A549 (cell line): ENCODE measurements at regions of chr9 and their contacts with region 1.

Region 1: GRCh38 chr9:136762915-136763648 is 1.2 kb downstream of the LCN15 start:
- DNase-seq: peak; percentile 49 to 79
- ATAC-seq: peak; percentile 21 to 68; a peak in 4 of 6 replicates
- H3K4me3 ChIP-seq: no peak overlapping the region
- H3K27ac ChIP-seq: peak overlapping the region in 1 of 2 experiments; percentile 68; a peak in 3 of 6 replicates
- H3K4me1 ChIP-seq: peaks cover 16% of the 10 kb centered on the region
- CTCF ChIP-seq: no peak
- EP300 ChIP-seq: no peak
- POLR2A ChIP-seq: peak; percentile 22; the same call in 1 of the 2 replicates
- RAD21 ChIP-seq: no peak

Region 2: DNA sequence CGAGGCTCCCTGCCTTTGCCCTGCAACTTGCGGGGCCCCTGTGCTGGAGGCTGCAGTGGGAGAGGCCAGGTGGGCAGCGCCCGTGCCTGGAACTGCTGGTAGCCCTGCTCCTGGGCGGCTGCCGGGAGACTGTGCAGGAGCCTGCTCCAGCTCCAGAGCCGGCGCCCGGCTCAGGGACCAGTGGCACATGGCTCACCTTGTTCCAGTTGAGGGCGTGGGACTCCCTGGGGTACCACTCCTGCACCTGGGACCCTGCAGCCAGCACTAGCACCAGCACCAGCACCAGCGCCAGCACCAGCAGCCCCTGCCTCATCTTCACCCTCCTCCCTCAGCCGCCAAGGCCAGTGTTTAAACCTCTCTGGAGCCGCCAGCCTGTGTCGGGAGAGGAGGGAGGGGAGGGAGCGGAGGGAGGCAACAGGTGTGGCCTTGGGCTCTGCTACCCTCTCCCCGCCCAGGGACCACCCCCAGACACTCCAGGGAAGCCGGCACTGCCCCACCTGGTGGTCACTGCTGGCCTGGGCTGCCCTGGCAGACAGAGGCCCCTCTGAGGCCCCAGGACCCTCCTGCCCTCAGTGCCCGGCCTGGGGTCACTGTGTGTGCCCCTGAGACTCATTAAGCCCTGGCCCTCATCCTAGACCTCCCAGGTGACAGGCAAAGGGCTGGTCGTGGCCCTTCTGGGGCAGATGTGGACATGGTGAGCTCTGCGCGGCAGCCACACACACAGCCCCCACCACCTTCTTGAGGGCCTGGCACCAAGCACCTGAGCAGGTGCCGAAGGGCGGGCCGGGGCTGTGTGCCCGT is 20.3 kb before region 1 on chr9 and contains the start of gene LCN10:
- CTCF ChIA-PET with region 1: interaction called, 79 read pairs
- POLR2A ChIA-PET with region 1: interaction called, 5 read pairs
- DNase-seq: no peak
- ATAC-seq: peak; percentile 25 to 76; a peak in 5 of 6 replicates
- H3K4me3 ChIP-seq: no peak within 1 kb of the TSS
- H3K27ac ChIP-seq: no peak within 1 kb of the TSS
- H3K4me1 ChIP-seq: no peaks in the 10 kb centered on the region
- CTCF ChIP-seq: 0 out of 3 replicates have a peak, but pooled peaks have one; percentile 10
- EP300 ChIP-seq: no peak
- POLR2A ChIP-seq: no peak
- RAD21 ChIP-seq: no peak
- polyA plus RNA-seq, gene LCN10: not detected in 2 replicates

Region 3: GRCh38 chr9:136823136-136824046 is 60.3 kb after region 1 on chr9:
- CTCF ChIA-PET with region 1: no interaction called
- POLR2A ChIA-PET with region 1: no interaction called
- DNase-seq: no peak
- ATAC-seq: no peak
- H3K4me3 ChIP-seq: no peak overlapping the region
- H3K27ac ChIP-seq: no peak overlapping the region
- H3K4me1 ChIP-seq: no peaks in the 10 kb centered on the region
- CTCF ChIP-seq: no peak
- EP300 ChIP-seq: no peak
- POLR2A ChIP-seq: no peak
- RAD21 ChIP-seq: no peak